PC-3 (cell line): ENCODE measurements at regions of chr1 and their contacts with region 1.

Region 1: GRCh38 chr1:228212966-228213844 is 5.4 kb downstream of the OBSCN start:
- DNase-seq: peak; percentile 89
- ATAC-seq: peak; percentile 91
- H3K4me3 ChIP-seq: peak overlapping the region; percentile 78
- H3K27ac ChIP-seq: peak overlapping the region; percentile 31; the same call in 1 of the 2 replicates
- H3K4me1 ChIP-seq: no peaks in the 10 kb centered on the region
- H3K27me3 ChIP-seq: no peaks in the 10 kb centered on the region
- CTCF ChIP-seq: peak; percentile 64

Region 2: DNA sequence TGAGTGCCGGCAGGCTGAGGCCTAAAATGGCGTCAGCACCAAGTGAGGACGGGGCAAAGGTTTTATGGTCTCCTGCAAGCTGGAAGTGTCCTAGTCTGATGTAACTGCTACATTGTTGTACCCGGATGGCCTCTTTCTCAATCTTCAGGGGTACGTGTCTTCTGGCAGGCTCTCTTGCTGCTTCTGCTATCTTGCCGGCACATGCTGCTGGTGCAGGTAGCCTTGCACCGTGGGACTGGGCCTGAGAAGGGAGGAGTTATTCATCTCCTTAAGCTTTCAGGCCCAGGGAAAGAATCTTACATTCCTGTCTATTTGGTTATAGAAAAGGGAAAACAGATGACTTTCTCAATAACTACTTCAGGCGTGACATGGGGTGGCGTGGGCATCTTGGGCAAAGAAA is 577.6 kb before region 1 on chr1:
- CTCF ChIA-PET with region 1: no interaction called
- POLR2A ChIA-PET with region 1: no interaction called
- intact Hi-C with region 1: no loop called
- DNase-seq: no peak
- ATAC-seq: no peak
- H3K4me3 ChIP-seq: no peak overlapping the region
- H3K27ac ChIP-seq: no peak overlapping the region
- H3K4me1 ChIP-seq: no peaks in the 10 kb centered on the region
- H3K27me3 ChIP-seq: no peaks in the 10 kb centered on the region
- CTCF ChIP-seq: no peak

Region 3: DNA sequence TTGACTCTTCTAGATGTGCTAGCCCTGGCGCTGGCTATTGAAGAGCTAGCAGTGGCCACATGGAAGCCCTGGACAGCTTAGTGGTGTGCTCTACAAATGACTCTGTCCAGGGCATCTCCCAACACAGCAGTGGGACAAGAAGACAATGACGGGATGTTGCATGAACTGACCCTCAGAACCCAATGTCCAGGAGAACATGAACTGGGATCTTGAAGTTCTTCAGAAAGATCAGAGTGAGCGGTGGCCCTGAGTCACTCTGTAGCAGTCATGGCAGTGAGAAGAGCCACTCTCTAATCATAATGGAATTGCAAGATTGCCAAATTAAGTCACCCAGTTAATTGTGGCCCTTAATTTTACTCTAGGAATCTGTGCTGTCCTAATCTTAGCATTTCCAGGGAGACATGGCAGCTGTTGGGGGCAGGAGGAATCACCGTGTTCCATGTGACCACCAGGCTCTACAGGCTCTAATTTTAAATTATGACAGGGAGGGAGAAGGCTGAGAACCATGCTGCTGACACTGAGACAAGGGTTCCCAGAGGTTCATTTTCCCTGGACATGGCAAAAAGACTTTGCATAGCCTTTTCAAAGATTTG is 15.6 kb before region 1 on chr1:
- CTCF ChIA-PET with region 1: no interaction called
- POLR2A ChIA-PET with region 1: no interaction called
- intact Hi-C with region 1: no loop called
- DNase-seq: no peak
- ATAC-seq: no peak
- H3K4me3 ChIP-seq: no peak overlapping the region
- H3K27ac ChIP-seq: no peak overlapping the region
- H3K4me1 ChIP-seq: no peaks in the 10 kb centered on the region
- H3K27me3 ChIP-seq: no peaks in the 10 kb centered on the region
- CTCF ChIP-seq: no peak

Region 4: GRCh38 chr1:228265167-228265566 is 52.0 kb after region 1 on chr1:
- CTCF ChIA-PET with region 1: no interaction called
- POLR2A ChIA-PET with region 1: no interaction called
- intact Hi-C with region 1: loop called (anchors 2 kb)
- DNase-seq: peak; percentile 28
- ATAC-seq: peak; percentile 81
- H3K4me3 ChIP-seq: no peak overlapping the region
- H3K27ac ChIP-seq: no peak overlapping the region
- H3K4me1 ChIP-seq: no peaks in the 10 kb centered on the region
- H3K27me3 ChIP-seq: no peaks in the 10 kb centered on the region
- CTCF ChIP-seq: peak; percentile 45